SK-N-SH (cell line): ENCODE measurements at regions of chr7 and their contacts with region 1.

Region 1: GRCh38 chr7:38934536-38934935 is 25.5 kb upstream of the VPS41 start:
- DNase-seq: no peak
- H3K4me3 ChIP-seq: no peak overlapping the region
- H3K27ac ChIP-seq: no peak overlapping the region
- H3K4me1 ChIP-seq: peaks cover 0 to 10% of the 10 kb centered on the region in 2 experiments; a peak in 1 of 4 replicates
- H3K27me3 ChIP-seq: peaks cover 13% of the 10 kb centered on the region
- CTCF ChIP-seq: no peak
- EP300 ChIP-seq: no peak
- RAD21 ChIP-seq: no peak

Region 2: GRCh38 chr7:38964921-38965320 is 30.4 kb after region 1 on chr7:
- CTCF ChIA-PET with region 1: no interaction called
- POLR2A ChIA-PET with region 1: no interaction called
- DNase-seq: no peak
- H3K4me3 ChIP-seq: no peak overlapping the region
- H3K27ac ChIP-seq: no peak overlapping the region
- H3K4me1 ChIP-seq: no peaks in the 10 kb centered on the region
- H3K27me3 ChIP-seq: 0 out of 2 replicates have a peak, but pooled peaks cover 4% of the 10 kb centered on the region
- CTCF ChIP-seq: no peak
- EP300 ChIP-seq: no peak
- RAD21 ChIP-seq: no peak

Region 3: DNA sequence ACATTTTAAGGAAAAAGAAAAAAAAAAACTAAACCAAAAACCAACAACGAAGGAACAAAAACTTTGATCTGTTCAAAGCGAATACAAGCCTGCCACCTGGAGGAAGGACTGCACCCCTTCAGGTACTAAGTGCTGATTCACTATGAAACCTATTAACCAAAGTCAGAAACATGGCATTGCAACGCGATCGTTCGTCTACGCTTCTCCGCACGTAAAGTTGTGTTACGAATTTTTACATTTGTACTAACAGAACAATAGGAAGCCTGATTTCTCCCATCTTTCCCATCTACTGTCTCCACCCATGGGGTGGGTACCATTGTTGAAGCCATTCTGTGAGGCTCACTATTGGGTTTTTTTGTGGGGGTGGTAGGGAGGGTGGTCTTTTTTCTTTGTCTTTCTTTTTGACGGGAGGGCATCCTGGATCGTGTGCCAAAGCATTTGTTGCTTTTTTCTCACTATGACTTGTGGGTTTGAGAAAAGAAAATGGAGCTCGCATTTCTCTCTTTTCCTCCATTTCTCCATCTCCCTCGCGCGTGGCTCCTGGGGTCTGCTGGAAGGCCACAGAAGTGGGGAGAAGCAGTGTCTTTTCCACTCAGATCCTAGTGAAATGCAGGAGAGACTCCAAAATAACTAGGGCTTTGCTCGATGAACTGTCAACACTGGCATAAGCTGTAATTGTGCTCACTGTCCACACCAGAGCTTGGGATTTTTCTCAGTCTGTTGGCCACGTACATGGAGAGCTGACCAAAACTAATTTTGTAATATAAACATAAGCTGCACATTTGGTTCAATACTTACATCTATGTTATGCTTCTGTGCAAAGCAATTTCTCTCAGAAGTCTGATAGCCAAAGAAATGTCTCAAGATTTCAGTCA is 530.8 kb after region 1 on chr7:
- CTCF ChIA-PET with region 1: interaction called, 11 read pairs
- POLR2A ChIA-PET with region 1: no interaction called
- DNase-seq: peak; percentile 63
- H3K4me3 ChIP-seq: peak overlapping the region; percentile 21 to 28; a peak in 2 of 4 replicates
- H3K27ac ChIP-seq: no peak overlapping the region
- H3K4me1 ChIP-seq: no peaks in the 10 kb centered on the region; a peak in 1 of 4 replicates
- H3K27me3 ChIP-seq: no peaks in the 10 kb centered on the region; the same call in 1 of the 2 replicates
- CTCF ChIP-seq: peak; percentile 98
- EP300 ChIP-seq: no peak
- RAD21 ChIP-seq: peak; percentile 86